A549 (cell line): ENCODE measurements at regions of chr7 and their contacts with region 1.

Region 1: GRCh38 chr7:103065667-103066066 is 8.9 kb downstream of the FBXL13 start:
- DNase-seq: peak; percentile 17 to 48
- ATAC-seq: peak; percentile 72 to 90; a peak in 3 of 6 replicates
- H3K4me3 ChIP-seq: no peak overlapping the region
- H3K27ac ChIP-seq: no peak overlapping the region
- H3K4me1 ChIP-seq: no peaks in the 10 kb centered on the region
- CTCF ChIP-seq: peak; percentile 42
- EP300 ChIP-seq: no peak
- POLR2A ChIP-seq: no peak
- RAD21 ChIP-seq: peak; percentile 44 to 66

Region 2: DNA sequence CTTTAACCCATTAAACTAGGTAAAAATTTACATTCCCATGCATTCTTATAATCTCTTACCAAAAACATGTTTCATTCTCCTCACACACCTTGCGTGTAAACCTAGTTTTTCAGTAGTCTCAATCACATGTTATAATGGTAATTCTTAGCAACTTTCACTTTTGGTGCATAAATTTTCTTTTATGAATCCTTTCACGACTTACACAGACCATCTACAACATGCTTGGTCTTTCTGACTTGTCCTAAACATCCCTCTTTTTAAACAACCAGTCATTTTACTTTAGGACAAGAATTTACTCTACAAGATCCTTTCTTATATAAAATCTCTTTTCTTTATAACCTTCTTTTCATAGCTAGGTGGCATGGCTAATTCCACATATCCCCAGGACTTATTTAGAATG is 16.8 kb before region 1 on chr7:
- CTCF ChIA-PET with region 1: interaction called, 33 read pairs
- POLR2A ChIA-PET with region 1: interaction called, 8 read pairs
- DNase-seq: peak in 1 of 2 experiments; percentile 50
- ATAC-seq: no peak
- H3K4me3 ChIP-seq: no peak overlapping the region
- H3K27ac ChIP-seq: no peak overlapping the region
- H3K4me1 ChIP-seq: no peaks in the 10 kb centered on the region
- CTCF ChIP-seq: no peak
- EP300 ChIP-seq: no peak
- POLR2A ChIP-seq: no peak
- RAD21 ChIP-seq: no peak

Region 3: DNA sequence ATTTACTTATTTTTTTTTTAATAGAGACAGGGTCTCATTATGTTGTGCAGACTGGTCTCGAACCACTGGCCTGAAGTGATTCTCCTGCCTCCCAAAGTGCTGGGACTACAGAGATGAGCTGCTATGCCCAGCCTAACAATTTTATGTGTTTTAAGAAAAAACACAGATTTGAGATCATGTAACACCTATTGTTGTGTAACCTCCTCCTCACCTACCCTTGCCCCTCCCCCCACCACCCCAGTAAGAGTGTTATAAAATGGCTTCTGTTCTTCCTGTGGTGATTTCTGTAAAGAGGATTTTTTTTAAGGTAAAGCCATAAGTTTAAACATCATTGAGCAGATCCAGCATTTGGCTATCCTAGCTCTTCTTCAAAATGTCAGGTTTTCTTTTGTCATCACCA is 16.8 kb after region 1 on chr7:
- CTCF ChIA-PET with region 1: interaction called, 61 read pairs
- POLR2A ChIA-PET with region 1: no interaction called
- DNase-seq: no peak
- ATAC-seq: no peak
- H3K4me3 ChIP-seq: no peak overlapping the region
- H3K27ac ChIP-seq: no peak overlapping the region
- H3K4me1 ChIP-seq: no peaks in the 10 kb centered on the region
- CTCF ChIP-seq: no peak
- EP300 ChIP-seq: no peak
- POLR2A ChIP-seq: no peak
- RAD21 ChIP-seq: no peak

Region 4: GRCh38 chr7:103148994-103149807 is 83.5 kb after region 1 on chr7 and contains the start of gene NAPEPLD:
- CTCF ChIA-PET with region 1: no interaction called
- POLR2A ChIA-PET with region 1: no interaction called
- DNase-seq: peak; percentile 89 to 94
- ATAC-seq: peak; percentile 94 to 95
- H3K4me3 ChIP-seq: peak within 1 kb of the TSS; percentile 63
- H3K27ac ChIP-seq: peak within 1 kb of the TSS; percentile 92 to 93
- H3K4me1 ChIP-seq: peaks cover 14% of the 10 kb centered on the region; the same call in 2 of the 3 replicates
- CTCF ChIP-seq: no peak
- EP300 ChIP-seq: no peak
- POLR2A ChIP-seq: peak; percentile 21
- RAD21 ChIP-seq: no peak
- polyA plus RNA-seq, gene NAPEPLD: 12.0 and 12.1 TPM in 2 replicates

Region 5: GRCh38 chr7:103379270-103379975 is 313.8 kb after region 1 on chr7:
- CTCF ChIA-PET with region 1: no interaction called
- POLR2A ChIA-PET with region 1: no interaction called
- DNase-seq: no peak
- ATAC-seq: 0 out of 6 replicates have a peak, but pooled peaks have one; percentile 14 to 32
- H3K4me3 ChIP-seq: no peak overlapping the region
- H3K27ac ChIP-seq: no peak overlapping the region
- H3K4me1 ChIP-seq: no peaks in the 10 kb centered on the region
- CTCF ChIP-seq: no peak
- EP300 ChIP-seq: no peak
- POLR2A ChIP-seq: no peak
- RAD21 ChIP-seq: no peak